ENCODE measurements at regions of chr6 and their contacts with region 1.

Region 1: DNA sequence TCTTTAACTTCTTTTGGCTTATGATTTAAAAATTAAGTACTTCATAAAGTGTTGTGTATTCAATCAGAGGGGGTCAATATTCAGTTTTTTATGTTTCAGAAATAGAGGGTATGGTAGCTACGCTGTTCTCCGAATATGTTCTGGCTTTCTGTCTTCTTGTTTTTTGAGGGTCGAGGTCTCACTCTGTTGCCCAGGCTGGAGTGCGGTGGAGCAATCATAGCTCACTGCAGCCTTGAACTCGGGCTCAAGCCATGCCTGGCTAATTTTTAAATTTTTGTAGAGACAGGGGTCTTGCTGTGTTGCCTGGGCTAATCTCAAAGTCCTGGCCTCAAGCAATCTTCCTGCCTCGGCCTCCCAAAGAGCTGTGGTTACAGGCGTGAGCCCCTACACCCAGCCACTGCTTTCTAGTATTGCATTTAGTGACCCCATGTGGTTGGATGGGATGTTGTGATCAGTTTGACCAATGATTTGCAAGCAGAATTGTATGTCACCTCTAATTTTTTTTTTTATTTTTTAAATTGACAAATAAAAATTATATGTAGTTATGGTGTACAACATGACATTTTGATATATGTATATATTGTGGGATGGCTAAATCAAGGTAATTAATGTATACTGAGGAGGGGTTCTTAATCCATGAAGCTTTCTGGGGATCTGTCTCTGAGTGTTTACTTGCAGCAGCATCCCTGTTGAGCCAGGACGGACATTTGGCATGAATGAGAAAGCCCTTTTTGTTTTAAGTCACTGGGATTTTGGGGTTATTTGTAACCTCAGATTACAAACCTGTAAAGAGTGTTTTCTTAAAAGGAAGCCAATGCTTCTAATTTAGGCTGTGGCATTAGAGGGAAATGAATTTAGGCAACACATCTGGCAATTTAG is 38.5 kb upstream of the DEK start:
- DNase-seq: peak in 1 of 2 experiments; percentile 18
- H3K4me3 ChIP-seq: no peak overlapping the region
- H3K4me3 Mint-ChIP-seq: no peak overlapping the region
- H3K27ac Mint-ChIP-seq: no peak overlapping the region
- H3K4me1 ChIP-seq: no peaks in the 10 kb centered on the region
- H3K4me1 Mint-ChIP-seq: no peaks in the 10 kb centered on the region
- H3K27me3 ChIP-seq: no peaks in the 10 kb centered on the region
- H3K27me3 Mint-ChIP-seq: no peaks in the 10 kb centered on the region
- CTCF ChIP-seq: peak; percentile 21 to 33

Region 2: DNA sequence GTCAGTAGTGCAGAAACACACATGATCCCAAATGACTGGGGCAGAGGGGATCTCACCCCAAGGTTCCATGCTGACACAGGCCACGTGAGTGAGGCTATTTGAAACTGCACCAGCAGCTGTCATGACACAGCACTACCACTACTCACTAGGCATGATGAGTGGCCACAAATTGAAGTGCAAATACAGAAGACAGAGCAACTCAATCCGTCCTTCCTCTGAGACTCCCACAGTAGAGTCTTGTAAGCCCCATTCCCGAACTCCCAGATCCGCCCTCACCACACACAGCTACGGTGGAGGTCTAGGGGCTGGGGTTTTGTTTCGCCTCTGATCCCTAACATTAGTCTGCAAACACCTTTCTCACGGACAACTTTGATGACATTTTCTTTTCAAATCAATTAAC is 482.7 kb before region 1 on chr6:
- CTCF ChIA-PET with region 1: no interaction called
- POLR2A ChIA-PET with region 1: no interaction called
- intact Hi-C with region 1: no loop called
- DNase-seq: peak in 1 of 2 experiments; percentile 9
- H3K4me3 ChIP-seq: no peak overlapping the region
- H3K4me3 Mint-ChIP-seq: no peak overlapping the region
- H3K27ac Mint-ChIP-seq: no peak overlapping the region
- H3K4me1 ChIP-seq: peaks cover 17% of the 10 kb centered on the region
- H3K4me1 Mint-ChIP-seq: peaks cover 14% of the 10 kb centered on the region
- H3K27me3 ChIP-seq: no peaks in the 10 kb centered on the region
- H3K27me3 Mint-ChIP-seq: no peaks in the 10 kb centered on the region
- CTCF ChIP-seq: peak in 1 of 2 experiments; percentile 5

Region 3: GRCh38 chr6:18264219-18264922 is 38.4 kb before region 1 on chr6 and contains the start of gene DEK:
- CTCF ChIA-PET with region 1: no interaction called
- POLR2A ChIA-PET with region 1: no interaction called
- intact Hi-C with region 1: loop called (anchors 1 kb)
- DNase-seq: peak; percentile 90 to 91
- H3K4me3 ChIP-seq: peak within 1 kb of the TSS; percentile 95
- H3K4me3 Mint-ChIP-seq: peak within 1 kb of the TSS; percentile 95
- H3K27ac Mint-ChIP-seq: peak within 1 kb of the TSS; percentile 93
- H3K4me1 ChIP-seq: peaks cover 12% of the 10 kb centered on the region
- H3K4me1 Mint-ChIP-seq: peaks cover 8% of the 10 kb centered on the region
- H3K27me3 ChIP-seq: no peaks in the 10 kb centered on the region
- H3K27me3 Mint-ChIP-seq: no peaks in the 10 kb centered on the region
- CTCF ChIP-seq: peak; percentile 23 to 36
- total RNA-seq, gene DEK: 170 and 171 TPM in 2 replicates

Region 4: GRCh38 chr6:18387061-18387721 is 84.4 kb after region 1 on chr6 and contains the start of gene RNF144B:
- CTCF ChIA-PET with region 1: no interaction called
- POLR2A ChIA-PET with region 1: no interaction called
- intact Hi-C with region 1: no loop called
- DNase-seq: peak; percentile 63 to 66
- H3K4me3 ChIP-seq: peak within 1 kb of the TSS; percentile 48
- H3K4me3 Mint-ChIP-seq: peak within 1 kb of the TSS; percentile 87
- H3K27ac Mint-ChIP-seq: peak within 1 kb of the TSS; percentile 49
- H3K4me1 ChIP-seq: 0 out of 2 replicates have a peak, but pooled peaks cover 3% of the 10 kb centered on the region
- H3K4me1 Mint-ChIP-seq: peaks cover 6% of the 10 kb centered on the region
- H3K27me3 ChIP-seq: no peaks in the 10 kb centered on the region
- H3K27me3 Mint-ChIP-seq: peaks cover 21% of the 10 kb centered on the region
- CTCF ChIP-seq: peak in 1 of 2 experiments; percentile 6
- total RNA-seq, gene RNF144B: 0.39 TPM in 2 replicates

Measured in Caco-2 (cell line).